Activated T-helper 1 cell treated with anti-CD3 and anti-CD28 coated beads, Interleukin-12 subunit alpha, Interleukin-12 subunit beta, Interleukin-2, Interleukin-4 antibody, amounts not matched to agents 30 ng/mL and 10 ng/mL and 1 ng/mL, durations not matched to agents 14 hours and 24 hours and 36 hours (primary cell): ENCODE measurements at regions of chr7 and their contacts with region 1.

Region 1: DNA sequence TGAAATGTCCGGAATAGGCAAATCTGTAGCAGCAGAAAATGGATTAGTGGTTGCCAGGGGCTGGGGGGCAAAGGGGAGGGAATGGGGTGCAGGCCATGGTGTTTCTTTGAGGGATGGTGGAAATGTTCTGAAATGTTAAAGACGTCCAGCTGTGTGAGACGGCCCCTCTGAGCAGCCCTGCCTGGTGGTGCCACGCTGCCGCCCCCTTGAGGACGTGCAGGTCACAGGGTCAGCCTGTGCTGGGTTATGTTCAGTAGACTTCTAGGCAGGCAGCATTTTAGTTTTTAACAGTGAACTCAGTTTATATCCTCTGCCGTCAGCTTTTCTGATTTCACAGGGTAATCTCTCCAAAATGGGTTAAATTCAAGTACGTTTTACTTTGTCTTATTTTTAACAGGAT is 9.4 kb downstream of the NUB1 start:
- DNase-seq: no peak
- H3K4me3 Mint-ChIP-seq: peak overlapping the region; percentile 65
- H3K27ac Mint-ChIP-seq: peak overlapping the region; percentile 93
- H3K4me1 Mint-ChIP-seq: peaks cover 39% of the 10 kb centered on the region
- H3K27me3 Mint-ChIP-seq: no peaks in the 10 kb centered on the region

Region 2: DNA sequence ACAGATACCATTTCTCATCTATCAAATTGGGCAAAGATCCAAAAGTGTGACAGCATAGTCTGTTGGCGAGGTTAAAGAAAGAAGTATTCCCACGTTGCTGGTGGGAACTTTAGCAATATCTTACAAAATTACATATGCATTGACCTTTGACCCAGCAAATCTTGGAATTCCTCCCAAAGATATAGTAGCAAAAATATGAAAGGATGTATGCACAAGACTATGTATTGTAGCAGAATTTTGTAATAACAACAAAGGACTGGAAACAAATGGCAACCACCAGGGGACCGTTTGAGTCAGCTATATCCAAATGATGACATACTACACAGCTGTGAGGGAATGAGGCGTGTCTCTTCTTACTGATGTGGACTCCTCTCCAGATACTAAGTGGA is 423.1 kb before region 1 on chr7:
- intact Hi-C with region 1: no loop called
- DNase-seq: no peak
- H3K4me3 Mint-ChIP-seq: no peak overlapping the region
- H3K27ac Mint-ChIP-seq: no peak overlapping the region
- H3K4me1 Mint-ChIP-seq: peaks cover 5% of the 10 kb centered on the region
- H3K27me3 Mint-ChIP-seq: peaks cover 34% of the 10 kb centered on the region

Region 3: GRCh38 chr7:151152643-151153513 is 198.1 kb before region 1 on chr7:
- intact Hi-C with region 1: no loop called
- DNase-seq: no peak
- H3K4me3 Mint-ChIP-seq: no peak overlapping the region
- H3K27ac Mint-ChIP-seq: no peak overlapping the region
- H3K4me1 Mint-ChIP-seq: no peaks in the 10 kb centered on the region
- H3K27me3 Mint-ChIP-seq: peaks cover 21% of the 10 kb centered on the region

Region 4: GRCh38 chr7:151226875-151227782 is 123.9 kb before region 1 on chr7 and contains the start of gene ABCF2:
- intact Hi-C with region 1: loop called (anchors 1 kb)
- DNase-seq: peak; percentile 97
- H3K4me3 Mint-ChIP-seq: peak within 1 kb of the TSS; percentile 98
- H3K27ac Mint-ChIP-seq: peak within 1 kb of the TSS; percentile 94
- H3K4me1 Mint-ChIP-seq: peaks cover 43% of the 10 kb centered on the region
- H3K27me3 Mint-ChIP-seq: peaks cover 2% of the 10 kb centered on the region
- total RNA-seq, gene ABCF2: 81.7 and 85.4 TPM in 2 replicates

Region 5: GRCh38 chr7:151276666-151277590 is 74.1 kb before region 1 on chr7:
- intact Hi-C with region 1: loop called (anchors 1 kb)
- DNase-seq: peak; percentile 47
- H3K4me3 Mint-ChIP-seq: peak overlapping the region; percentile 66
- H3K27ac Mint-ChIP-seq: peak overlapping the region; percentile 82
- H3K4me1 Mint-ChIP-seq: peaks cover 22% of the 10 kb centered on the region
- H3K27me3 Mint-ChIP-seq: peaks cover 28% of the 10 kb centered on the region

Region 6: DNA sequence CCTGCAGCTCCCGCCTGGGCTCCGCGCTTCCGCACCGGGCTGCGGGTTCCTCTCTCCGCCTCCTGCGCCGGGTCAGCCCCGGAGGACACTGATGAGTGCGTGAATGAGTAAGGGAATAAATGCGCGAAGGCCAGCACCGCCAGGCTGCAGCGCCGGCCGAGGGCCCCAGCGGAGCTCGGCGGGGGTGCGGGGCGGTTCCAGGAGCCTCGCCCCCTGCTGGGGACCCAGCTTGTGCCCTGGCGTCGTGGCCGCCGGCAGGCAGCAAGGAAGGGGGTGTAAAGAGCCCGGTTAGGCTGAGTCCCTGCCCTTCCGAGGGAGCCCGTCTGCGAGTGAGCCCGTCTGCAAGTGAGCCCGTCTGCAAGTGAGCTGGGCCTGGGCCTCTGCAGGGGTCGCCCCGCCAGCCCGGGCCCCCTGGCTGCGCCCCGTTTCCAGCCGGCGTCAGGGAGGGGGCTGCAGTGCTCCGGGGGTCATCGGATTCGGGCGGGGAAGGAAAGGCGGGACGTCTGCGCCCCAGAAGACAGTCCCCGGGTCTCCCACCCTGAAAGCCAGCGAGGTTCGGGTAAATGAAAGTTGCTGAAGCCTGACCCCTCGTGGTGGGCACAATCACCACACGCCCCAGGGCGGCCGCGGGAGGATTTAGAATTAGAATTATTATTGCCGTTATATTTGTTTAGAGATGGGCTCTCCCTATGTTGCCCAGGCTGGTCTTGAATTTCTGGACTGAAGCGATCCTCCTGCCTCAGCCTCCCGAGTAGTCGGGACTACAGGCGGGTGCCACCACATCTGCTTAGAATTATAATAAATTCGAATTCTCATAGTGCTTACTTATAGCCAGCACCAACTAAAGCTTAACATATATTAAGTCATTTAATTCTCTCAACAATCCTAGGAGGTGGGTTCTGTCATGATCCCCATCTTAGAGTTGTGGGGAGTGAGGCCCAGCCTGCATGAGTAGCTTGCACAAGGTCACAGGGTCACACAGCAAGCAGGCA is 97.5 kb after region 1 on chr7:
- intact Hi-C with region 1: loop called (anchors 5 kb)
- DNase-seq: peak; percentile 60
- H3K4me3 Mint-ChIP-seq: peak overlapping the region; percentile 58
- H3K27ac Mint-ChIP-seq: no peak overlapping the region
- H3K4me1 Mint-ChIP-seq: peaks cover 5% of the 10 kb centered on the region
- H3K27me3 Mint-ChIP-seq: peaks cover 28% of the 10 kb centered on the region

Region 7: GRCh38 chr7:152025077-152025936 is 674.3 kb after region 1 on chr7 and contains the start of gene GALNT11:
- intact Hi-C with region 1: loop called (anchors 2 kb)
- DNase-seq: peak; percentile 88
- H3K4me3 Mint-ChIP-seq: peak within 1 kb of the TSS; percentile 85
- H3K27ac Mint-ChIP-seq: peak within 1 kb of the TSS; percentile 86
- H3K4me1 Mint-ChIP-seq: peaks cover 26% of the 10 kb centered on the region
- H3K27me3 Mint-ChIP-seq: peaks cover 10% of the 10 kb centered on the region
- total RNA-seq, gene GALNT11: 20.5 and 21.2 TPM in 2 replicates